Mammary epithelial cell (primary cell): ENCODE measurements at regions of chr9 and their contacts with region 1.

Region 1: GRCh38 chr9:33076358-33077004 is at the start of gene SMU1:
- DNase-seq: peak; percentile 96
- H3K4me3 ChIP-seq: peak within 1 kb of the TSS; percentile 57 to 75 (median 68)
- H3K27ac ChIP-seq: peak within 1 kb of the TSS; percentile 94
- H3K4me1 ChIP-seq: peaks cover 16% of the 10 kb centered on the region
- H3K27me3 ChIP-seq: no peaks in the 10 kb centered on the region
- CTCF ChIP-seq: no peak
- total RNA-seq, gene SMU1: 18.0 to 28.3 TPM

Region 2: DNA sequence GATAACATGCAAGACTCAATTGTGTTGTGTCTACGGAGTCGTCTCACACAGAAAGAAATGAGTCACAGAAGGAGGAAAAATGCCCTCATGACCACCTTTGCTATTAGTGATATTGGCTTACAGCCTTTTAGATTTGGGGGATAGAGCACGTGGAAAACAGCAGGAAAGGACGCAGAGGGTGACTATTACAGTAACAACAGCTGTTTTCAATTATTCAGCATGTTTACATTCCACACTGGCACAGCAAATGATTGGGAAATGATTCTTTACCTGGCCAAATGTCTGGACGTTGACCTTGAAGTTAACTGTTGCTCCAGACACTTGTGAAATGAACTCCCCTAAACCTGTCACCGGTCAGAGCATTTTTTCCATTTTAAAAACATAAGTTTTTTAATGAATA is 121.8 kb before region 1 on chr9:
- CTCF ChIA-PET with region 1: no interaction called
- dilution Hi-C with region 1: no loop called
- in situ Hi-C with region 1: no loop called
- intact Hi-C with region 1: no loop called
- DNase-seq: no peak
- H3K4me3 ChIP-seq: no peak overlapping the region
- H3K27ac ChIP-seq: no peak overlapping the region
- H3K4me1 ChIP-seq: no peaks in the 10 kb centered on the region
- H3K27me3 ChIP-seq: no peaks in the 10 kb centered on the region
- CTCF ChIP-seq: no peak

Region 3: GRCh38 chr9:33024966-33025571 is 51.4 kb before region 1 on chr9 and contains the start of gene DNAJA1:
- CTCF ChIA-PET with region 1: no interaction called
- dilution Hi-C with region 1: loop called (anchors 5 kb)
- in situ Hi-C with region 1: no loop called
- intact Hi-C with region 1: loop called (anchors 5 kb)
- DNase-seq: peak; percentile 94
- H3K4me3 ChIP-seq: peak within 1 kb of the TSS; percentile 83
- H3K27ac ChIP-seq: peak within 1 kb of the TSS; percentile 85
- H3K4me1 ChIP-seq: peaks cover 50% of the 10 kb centered on the region
- H3K27me3 ChIP-seq: no peaks in the 10 kb centered on the region
- CTCF ChIP-seq: no peak
- total RNA-seq, gene DNAJA1: 52.7 to 106 TPM

Region 4: GRCh38 chr9:33159760-33160127 is 83.3 kb after region 1 on chr9:
- CTCF ChIA-PET with region 1: no interaction called
- dilution Hi-C with region 1: loop called (anchors 5 kb)
- in situ Hi-C with region 1: no loop called
- intact Hi-C with region 1: no loop called
- DNase-seq: peak; percentile 90
- H3K4me3 ChIP-seq: peak overlapping the region in 1 of 3 experiments; percentile 6
- H3K27ac ChIP-seq: peak overlapping the region; percentile 96
- H3K4me1 ChIP-seq: peaks cover 95% of the 10 kb centered on the region
- H3K27me3 ChIP-seq: no peaks in the 10 kb centered on the region
- CTCF ChIP-seq: no peak

Region 5: GRCh38 chr9:33167046-33167808 is 90.7 kb after region 1 on chr9 and contains the start of gene B4GALT1:
- CTCF ChIA-PET with region 1: no interaction called
- dilution Hi-C with region 1: loop called (anchors 5 kb)
- in situ Hi-C with region 1: loop called (anchors 5 kb)
- intact Hi-C with region 1: loop called (anchors 1 kb)
- DNase-seq: peak; percentile 95
- H3K4me3 ChIP-seq: peak within 1 kb of the TSS; percentile 73 to 86 (median 81)
- H3K27ac ChIP-seq: peak within 1 kb of the TSS; percentile 96
- H3K4me1 ChIP-seq: peaks cover 49% of the 10 kb centered on the region
- H3K27me3 ChIP-seq: no peaks in the 10 kb centered on the region
- CTCF ChIP-seq: peak in 1 of 2 donors; percentile 13
- total RNA-seq, gene B4GALT1: 82.2 to 135 TPM

Region 6: DNA sequence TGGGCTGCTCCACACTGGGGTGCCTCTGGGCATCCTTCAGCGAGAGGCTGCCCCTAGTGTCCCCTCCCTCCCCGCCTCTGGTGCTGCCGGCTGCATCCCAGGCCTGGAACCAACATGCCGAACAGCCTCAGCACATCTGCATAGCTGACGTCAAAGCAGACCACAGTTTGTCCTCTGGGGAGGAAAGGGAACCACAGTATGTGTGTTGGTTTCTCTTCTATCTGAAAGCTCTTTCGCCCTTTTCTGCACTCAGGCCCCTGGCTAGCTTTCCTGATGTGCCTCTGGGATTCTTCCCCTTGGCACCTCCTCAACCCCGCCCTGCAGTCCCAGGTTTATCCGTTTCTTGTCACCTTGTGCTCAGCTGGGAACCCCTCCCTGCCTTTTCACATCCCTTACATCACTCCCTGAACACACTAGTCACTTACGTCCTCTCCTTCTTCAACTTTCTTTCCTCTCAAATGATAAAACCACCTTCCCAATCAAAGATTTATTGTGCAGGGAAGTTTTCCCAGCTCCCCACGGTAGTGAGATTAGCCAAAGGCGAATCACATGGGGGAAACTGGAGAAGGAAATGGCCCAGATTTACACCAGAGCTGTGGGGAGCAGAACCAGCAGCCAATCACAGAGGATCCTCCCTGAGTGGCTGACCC is 126.2 kb after region 1 on chr9:
- CTCF ChIA-PET with region 1: interaction called, 22 read pairs
- dilution Hi-C with region 1: no loop called
- in situ Hi-C with region 1: no loop called
- intact Hi-C with region 1: no loop called
- DNase-seq: no peak
- H3K4me3 ChIP-seq: no peak overlapping the region
- H3K27ac ChIP-seq: no peak overlapping the region
- H3K4me1 ChIP-seq: no peaks in the 10 kb centered on the region
- H3K27me3 ChIP-seq: no peaks in the 10 kb centered on the region
- CTCF ChIP-seq: no peak

Region 7: GRCh38 chr9:33211695-33212393 is 135.4 kb after region 1 on chr9:
- CTCF ChIA-PET with region 1: interaction called, 22 read pairs
- dilution Hi-C with region 1: no loop called
- in situ Hi-C with region 1: loop called in 1 of 2 experiments (anchors 5 kb)
- intact Hi-C with region 1: no loop called
- DNase-seq: peak; percentile 82
- H3K4me3 ChIP-seq: no peak overlapping the region
- H3K27ac ChIP-seq: no peak overlapping the region
- H3K4me1 ChIP-seq: peaks cover 14% of the 10 kb centered on the region
- H3K27me3 ChIP-seq: no peaks in the 10 kb centered on the region
- CTCF ChIP-seq: peak in 1 of 2 donors; percentile 19

Region 8: DNA sequence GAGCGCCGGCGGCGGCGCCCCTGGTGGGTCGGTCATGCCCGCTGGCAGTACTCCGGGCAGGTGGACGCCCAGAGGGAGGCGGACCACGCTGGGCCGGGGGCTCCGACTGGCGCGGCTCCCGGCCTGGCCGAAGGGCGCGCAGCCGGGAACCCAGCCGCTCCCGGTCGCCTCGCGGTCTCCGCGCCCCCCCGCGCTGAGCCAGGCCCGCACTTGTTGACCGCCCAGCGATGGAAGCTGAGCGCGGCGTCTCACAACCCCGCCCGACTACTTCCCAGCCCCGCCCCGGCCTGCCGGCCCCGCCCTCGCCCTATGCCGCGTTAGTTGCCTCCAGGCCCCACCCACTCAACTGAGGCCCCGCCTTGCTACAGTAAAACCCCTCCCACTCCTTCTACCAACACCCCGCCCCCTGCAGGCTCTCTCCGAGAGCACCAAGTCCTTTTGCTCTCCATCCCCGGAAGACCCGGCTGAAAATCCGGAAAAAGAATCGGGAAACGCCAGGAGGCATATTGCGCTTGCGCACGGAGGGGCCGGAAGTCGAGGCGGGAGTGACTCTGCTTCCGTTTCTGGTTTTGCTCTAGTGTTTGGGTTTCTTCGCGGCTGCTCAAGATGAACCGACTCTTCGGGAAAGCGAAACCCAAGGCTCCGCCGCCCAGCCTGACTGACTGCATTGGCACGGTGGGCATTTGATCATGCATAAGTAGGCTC is 188.1 kb after region 1 on chr9 and contains the starts of genes BAG1 and CHMP5:
- CTCF ChIA-PET with region 1: no interaction called
- dilution Hi-C with region 1: no loop called
- in situ Hi-C with region 1: no loop called
- intact Hi-C with region 1: loop called (anchors 1 kb)
- DNase-seq: peak; percentile 99
- H3K4me3 ChIP-seq: peak within 1 kb of the TSS; percentile 89 to 97 (median 96)
- H3K27ac ChIP-seq: peak within 1 kb of the TSS; percentile 87
- H3K4me1 ChIP-seq: peaks cover 17% of the 10 kb centered on the region
- H3K27me3 ChIP-seq: no peaks in the 10 kb centered on the region
- CTCF ChIP-seq: peak; percentile 11 to 45
- total RNA-seq, gene BAG1: 28.5 to 30.9 TPM
- total RNA-seq, gene CHMP5: 52.7 to 54.0 TPM